PC-3 (cell line): ENCODE measurements at regions of chrX and their contacts with region 1.

Region 1: GRCh38 chrX:43573441-43574015 is 82.6 kb upstream of the MAOA start:
- DNase-seq: no peak
- ATAC-seq: no peak
- H3K4me3 ChIP-seq: no peak overlapping the region
- H3K27ac ChIP-seq: no peak overlapping the region
- H3K4me1 ChIP-seq: no peaks in the 10 kb centered on the region
- H3K27me3 ChIP-seq: no peaks in the 10 kb centered on the region
- CTCF ChIP-seq: no peak

Region 2: GRCh38 chrX:43448688-43449087 is 124.8 kb before region 1 on chrX:
- CTCF ChIA-PET with region 1: no interaction called
- POLR2A ChIA-PET with region 1: no interaction called
- intact Hi-C with region 1: no loop called
- DNase-seq: no peak
- ATAC-seq: no peak
- H3K4me3 ChIP-seq: no peak overlapping the region
- H3K27ac ChIP-seq: no peak overlapping the region
- H3K4me1 ChIP-seq: no peaks in the 10 kb centered on the region
- H3K27me3 ChIP-seq: no peaks in the 10 kb centered on the region
- CTCF ChIP-seq: no peak

Region 3: GRCh38 chrX:44842555-44843317 is 1269.2 kb after region 1 on chrX:
- CTCF ChIA-PET with region 1: no interaction called
- POLR2A ChIA-PET with region 1: interaction called, 12 read pairs
- intact Hi-C with region 1: no loop called
- DNase-seq: peak; percentile 63
- ATAC-seq: peak; percentile 59
- H3K4me3 ChIP-seq: peak overlapping the region; percentile 36; the same call in 1 of the 2 replicates
- H3K27ac ChIP-seq: peak overlapping the region; percentile 96
- H3K4me1 ChIP-seq: peaks cover 26% of the 10 kb centered on the region
- H3K27me3 ChIP-seq: no peaks in the 10 kb centered on the region
- CTCF ChIP-seq: no peak